CD4-positive, alpha-beta T cell (primary cell): ENCODE measurements at regions of chr2 and their contacts with region 1.

Region 1: DNA sequence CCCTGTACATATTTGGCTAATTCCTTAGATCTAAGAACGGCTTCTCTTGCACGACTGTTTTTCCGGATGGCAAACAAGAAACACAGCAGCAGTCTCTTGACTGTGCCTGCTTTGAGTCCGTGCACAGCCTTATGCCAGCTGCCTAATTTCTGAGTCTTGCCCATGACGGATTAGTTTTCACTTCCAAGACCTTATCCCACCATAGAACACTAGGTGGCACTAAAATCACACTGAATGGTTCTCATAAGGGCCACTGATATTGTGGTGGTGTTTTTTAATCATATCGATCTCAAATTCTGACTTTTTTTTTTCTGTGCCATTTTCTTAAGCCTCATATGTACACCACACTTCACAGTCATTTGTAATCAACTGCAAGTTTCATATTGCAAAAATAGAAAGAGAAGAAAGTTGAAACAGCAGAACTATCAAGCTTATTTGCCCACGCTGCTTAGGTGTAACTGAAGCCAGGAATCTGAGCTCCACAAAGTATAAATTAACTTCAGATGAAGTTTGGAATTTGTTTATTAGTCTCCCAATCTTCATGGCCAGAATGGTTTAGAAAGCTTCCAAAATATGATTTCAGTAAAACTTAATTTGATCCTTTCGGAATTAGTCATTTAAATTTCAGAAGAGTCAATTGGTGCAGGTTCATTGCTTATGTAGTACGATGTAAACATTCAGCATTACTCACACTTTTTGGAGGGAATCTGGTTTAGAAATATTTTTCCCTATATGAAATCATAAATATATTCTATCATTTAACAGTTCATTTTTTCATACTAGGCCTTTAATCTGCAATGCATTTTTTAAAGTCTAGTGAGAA is 45.5 kb upstream of the SCN7A start:
- DNase-seq: peak in 5 of 14 experiments; percentile 1 to 60 (median 35)
- ATAC-seq: peak; percentile 74
- H3K4me3 ChIP-seq: no peak overlapping the region
- H3K4me3 Mint-ChIP-seq: no peak overlapping the region
- H3K27ac ChIP-seq: no peak overlapping the region
- H3K27ac Mint-ChIP-seq: no peak overlapping the region
- H3K4me1 ChIP-seq: peaks cover 3% of the 10 kb centered on the region
- H3K4me1 Mint-ChIP-seq: no peaks in the 10 kb centered on the region
- H3K27me3 ChIP-seq: no peaks in the 10 kb centered on the region
- H3K27me3 Mint-ChIP-seq: peaks cover 4% of the 10 kb centered on the region
- CTCF ChIP-seq: peak; percentile 86

Region 2: GRCh38 chr2:166895243-166895642 is 355.7 kb after region 1 on chr2:
- CTCF ChIA-PET with region 1: no interaction called
- POLR2A ChIA-PET with region 1: no interaction called
- intact Hi-C with region 1: loop called in 1 of 2 experiments (anchors 5 kb)
- DNase-seq: peak in 1 of 14 experiments; percentile 4
- ATAC-seq: no peak
- H3K4me3 ChIP-seq: no peak overlapping the region
- H3K4me3 Mint-ChIP-seq: no peak overlapping the region
- H3K27ac ChIP-seq: no peak overlapping the region
- H3K27ac Mint-ChIP-seq: no peak overlapping the region
- H3K4me1 ChIP-seq: no peaks in the 10 kb centered on the region
- H3K4me1 Mint-ChIP-seq: no peaks in the 10 kb centered on the region
- H3K27me3 ChIP-seq: no peaks in the 10 kb centered on the region
- H3K27me3 Mint-ChIP-seq: no peaks in the 10 kb centered on the region
- CTCF ChIP-seq: no peak

Region 3: DNA sequence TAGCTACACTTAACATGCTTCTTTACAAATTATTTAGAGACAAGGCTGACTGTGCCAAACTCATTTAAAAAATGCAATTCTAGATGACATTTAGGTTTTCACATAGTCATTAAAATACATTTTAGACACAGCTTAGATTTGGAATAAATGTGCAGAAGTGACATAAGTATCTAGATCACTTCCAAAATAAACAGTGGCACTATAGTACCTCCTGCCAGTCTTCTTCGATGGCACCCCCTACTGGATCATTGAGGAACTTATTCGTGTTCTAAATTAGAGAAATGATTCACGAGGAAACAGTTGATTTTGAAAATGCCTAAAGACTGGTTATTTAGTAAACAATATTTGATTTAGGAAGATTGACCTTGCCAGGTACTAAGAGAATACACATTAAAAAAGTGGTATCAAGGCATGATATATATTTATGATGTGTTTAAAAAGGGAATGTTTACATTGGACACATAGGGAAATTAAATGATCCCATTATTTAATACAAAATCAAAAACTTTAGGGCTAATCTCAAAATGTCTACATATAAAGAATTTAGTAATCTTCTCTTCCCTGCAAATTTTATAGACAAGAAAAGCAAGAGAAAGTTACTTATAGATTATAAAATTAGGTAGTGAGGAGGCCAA is 672.6 kb after region 1 on chr2:
- CTCF ChIA-PET with region 1: no interaction called
- POLR2A ChIA-PET with region 1: no interaction called
- intact Hi-C with region 1: loop called (anchors 1 to 5 kb)
- DNase-seq: peak in 4 of 14 experiments; percentile 17 to 32 (median 24)
- ATAC-seq: no peak
- H3K4me3 ChIP-seq: no peak overlapping the region
- H3K4me3 Mint-ChIP-seq: no peak overlapping the region
- H3K27ac ChIP-seq: no peak overlapping the region
- H3K27ac Mint-ChIP-seq: no peak overlapping the region
- H3K4me1 ChIP-seq: no peaks in the 10 kb centered on the region
- H3K4me1 Mint-ChIP-seq: no peaks in the 10 kb centered on the region
- H3K27me3 ChIP-seq: no peaks in the 10 kb centered on the region
- H3K27me3 Mint-ChIP-seq: peaks cover 4% of the 10 kb centered on the region
- CTCF ChIP-seq: peak; percentile 32

Region 4: DNA sequence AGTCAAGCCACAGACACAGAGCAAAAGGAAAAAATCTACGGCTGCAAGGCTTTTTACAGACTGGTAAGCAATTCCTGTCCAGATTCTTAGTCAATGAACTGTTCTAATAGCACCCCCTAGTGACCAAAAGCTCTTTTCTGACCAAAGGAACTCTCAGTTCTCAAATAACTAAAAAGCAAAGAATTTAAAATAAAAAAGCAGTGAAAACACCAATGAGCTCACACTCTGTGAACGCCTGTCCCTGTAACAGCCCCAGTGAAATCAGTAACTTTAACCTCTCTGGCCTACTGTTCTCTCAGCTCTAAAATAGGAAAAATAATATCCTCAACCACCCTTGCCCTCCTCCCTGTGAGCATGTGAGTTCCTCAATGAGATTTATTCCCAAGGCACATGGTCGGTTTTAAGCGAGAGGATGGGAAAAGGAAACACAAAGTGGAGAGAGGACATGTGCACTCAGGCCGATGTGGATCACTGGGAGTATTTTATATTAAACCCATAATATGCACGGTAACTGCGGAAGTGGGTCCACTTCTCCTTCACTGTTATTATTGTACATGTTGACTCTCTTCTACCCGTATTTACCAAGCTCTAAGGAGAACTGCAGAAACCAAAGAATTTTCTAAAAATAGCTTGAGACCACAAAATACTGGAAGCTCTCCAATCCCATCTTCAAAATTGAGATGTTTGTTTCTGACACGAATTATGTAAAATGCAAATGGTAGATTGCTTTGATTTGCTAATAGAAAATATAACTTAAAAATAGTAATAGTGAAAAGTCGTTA is 1579.4 kb after region 1 on chr2:
- CTCF ChIA-PET with region 1: no interaction called
- POLR2A ChIA-PET with region 1: no interaction called
- intact Hi-C with region 1: loop called in 1 of 2 experiments (anchors 2 kb)
- DNase-seq: peak in 3 of 14 experiments; percentile 56 to 60 (median 56)
- ATAC-seq: no peak
- H3K4me3 ChIP-seq: no peak overlapping the region
- H3K4me3 Mint-ChIP-seq: no peak overlapping the region
- H3K27ac ChIP-seq: no peak overlapping the region
- H3K27ac Mint-ChIP-seq: no peak overlapping the region
- H3K4me1 ChIP-seq: no peaks in the 10 kb centered on the region
- H3K4me1 Mint-ChIP-seq: no peaks in the 10 kb centered on the region
- H3K27me3 ChIP-seq: no peaks in the 10 kb centered on the region
- H3K27me3 Mint-ChIP-seq: no peaks in the 10 kb centered on the region
- CTCF ChIP-seq: peak; percentile 51

Region 5: DNA sequence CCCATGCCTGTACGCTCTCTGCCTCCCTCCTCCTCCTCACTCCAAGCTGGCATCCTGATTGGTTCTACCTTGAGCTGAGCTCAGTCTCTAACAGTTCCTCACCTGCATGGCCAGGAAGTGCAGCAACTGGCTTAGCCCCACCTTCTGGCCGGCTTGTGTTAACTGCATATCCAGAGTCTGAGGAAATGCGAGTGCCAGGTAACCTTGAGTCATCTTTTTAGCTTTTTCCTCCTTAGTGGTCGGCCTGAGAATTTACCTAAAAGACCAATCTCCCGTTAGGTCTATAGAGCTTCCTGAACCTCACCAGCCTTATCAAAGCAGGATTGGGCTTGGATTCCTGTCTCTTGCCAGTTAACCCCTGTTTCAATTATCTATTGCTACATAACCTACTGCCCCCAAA is 1797.3 kb after region 1 on chr2:
- CTCF ChIA-PET with region 1: no interaction called
- POLR2A ChIA-PET with region 1: no interaction called
- intact Hi-C with region 1: loop called (anchors 10 kb)
- DNase-seq: peak; percentile 36 to 79 (median 53)
- ATAC-seq: peak; percentile 98
- H3K4me3 ChIP-seq: no peak overlapping the region
- H3K4me3 Mint-ChIP-seq: no peak overlapping the region
- H3K27ac ChIP-seq: no peak overlapping the region
- H3K27ac Mint-ChIP-seq: no peak overlapping the region
- H3K4me1 ChIP-seq: peaks cover 6% of the 10 kb centered on the region
- H3K4me1 Mint-ChIP-seq: no peaks in the 10 kb centered on the region
- H3K27me3 ChIP-seq: peaks cover 0 to 5% of the 10 kb centered on the region in 2 experiments
- H3K27me3 Mint-ChIP-seq: no peaks in the 10 kb centered on the region
- CTCF ChIP-seq: peak; percentile 50